Ascending aorta (tissue), 2 donors: ENCODE measurements at regions of chr7 and their contacts with region 1.

Region 1: GRCh38 chr7:87797798-87798403 is 78.3 kb downstream of the SLC25A40 start:
- DNase-seq: no peak
- H3K4me3 ChIP-seq: no peak overlapping the region
- H3K27ac ChIP-seq: no peak overlapping the region
- H3K4me1 ChIP-seq: no peaks in the 10 kb centered on the region
- H3K27me3 ChIP-seq: no peaks in the 10 kb centered on the region
- CTCF ChIP-seq: peak in 2 of 3 experiments; percentile 20 to 44

Region 2: GRCh38 chr7:88111136-88111743 is 313.3 kb after region 1 on chr7:
- intact Hi-C with region 1: loop called (anchors 2 kb)
- DNase-seq: no peak
- H3K4me3 ChIP-seq: no peak overlapping the region
- H3K27ac ChIP-seq: no peak overlapping the region
- H3K4me1 ChIP-seq: no peaks in the 10 kb centered on the region
- H3K27me3 ChIP-seq: no peaks in the 10 kb centered on the region
- CTCF ChIP-seq: peak in 2 of 3 experiments; percentile 25 to 53